ENCODE measurements at regions of chr1 and their contacts with region 1.

Region 1: GRCh38 chr1:41812051-41812450 is 106.7 kb downstream of the HIVEP3 start:
- DNase-seq: peak; percentile 59
- H3K4me3 ChIP-seq: no peak overlapping the region
- H3K27ac ChIP-seq: no peak overlapping the region
- H3K4me1 ChIP-seq: peaks cover 3% of the 10 kb centered on the region
- H3K27me3 ChIP-seq: no peaks in the 10 kb centered on the region
- CTCF ChIP-seq: peak; percentile 77 to 82

Region 2: GRCh38 chr1:41516168-41517061 is 295.6 kb before region 1 on chr1:
- CTCF ChIA-PET with region 1: no interaction called
- dilution Hi-C with region 1: no loop called
- in situ Hi-C with region 1: no loop called
- intact Hi-C with region 1: loop called (anchors 5 kb)
- DNase-seq: peak; percentile 71
- H3K4me3 ChIP-seq: peak overlapping the region in 2 of 3 experiments; percentile 18 to 38
- H3K27ac ChIP-seq: no peak overlapping the region
- H3K4me1 ChIP-seq: peaks cover 23% of the 10 kb centered on the region
- H3K27me3 ChIP-seq: no peaks in the 10 kb centered on the region
- CTCF ChIP-seq: peak; percentile 69 to 91

Region 3: GRCh38 chr1:41891199-41891896 is 79.3 kb after region 1 on chr1:
- CTCF ChIA-PET with region 1: no interaction called
- dilution Hi-C with region 1: no loop called
- in situ Hi-C with region 1: no loop called
- intact Hi-C with region 1: loop called (anchors 1 kb)
- DNase-seq: peak; percentile 55
- H3K4me3 ChIP-seq: peak overlapping the region; percentile 0 to 30 (median 17)
- H3K27ac ChIP-seq: peak overlapping the region; percentile 64
- H3K4me1 ChIP-seq: peaks cover 33% of the 10 kb centered on the region
- H3K27me3 ChIP-seq: no peaks in the 10 kb centered on the region
- CTCF ChIP-seq: peak in 1 of 2 donors; percentile 18

Region 4: DNA sequence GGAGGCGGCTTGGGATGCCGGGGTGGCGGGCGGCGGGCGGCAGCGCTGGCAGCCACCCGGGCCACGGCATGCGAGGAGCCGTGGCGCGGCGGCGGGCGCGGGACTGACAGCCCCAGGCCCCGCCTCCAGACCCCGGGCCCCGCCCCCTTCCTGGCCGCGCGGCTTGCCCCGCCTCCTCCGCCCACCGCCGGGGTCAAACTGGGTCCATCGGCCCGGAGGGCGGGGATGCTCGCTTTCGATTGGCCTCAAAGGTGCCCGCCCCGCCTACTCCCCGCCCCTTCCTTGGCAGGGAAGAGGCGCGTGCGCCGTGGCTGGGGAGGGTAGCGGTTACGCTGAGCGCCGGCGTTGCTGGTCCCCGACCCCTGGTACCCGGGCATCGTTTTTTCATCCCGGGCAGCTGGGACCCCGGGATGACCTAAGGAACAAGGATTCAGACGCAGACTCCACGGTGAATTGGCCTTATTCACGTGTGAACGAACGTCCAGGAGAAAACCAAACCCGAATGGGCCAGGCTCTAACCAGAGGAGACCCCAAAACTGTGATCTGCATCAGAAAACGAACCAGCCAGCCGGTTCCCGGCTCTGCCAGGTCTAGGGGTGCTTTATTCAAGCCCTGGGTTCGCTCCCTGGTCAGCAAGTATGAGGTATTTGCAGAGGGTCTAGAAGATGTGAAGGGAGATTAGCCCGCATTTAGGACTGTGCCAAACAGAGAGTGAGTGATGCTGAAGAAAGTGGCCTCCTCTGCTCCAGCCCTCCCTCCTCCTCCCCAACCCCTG is 224.0 kb after region 1 on chr1:
- CTCF ChIA-PET with region 1: no interaction called
- dilution Hi-C with region 1: no loop called
- in situ Hi-C with region 1: no loop called
- intact Hi-C with region 1: loop called (anchors 1 kb)
- DNase-seq: peak; percentile 87
- H3K4me3 ChIP-seq: peak overlapping the region; percentile 77 to 93 (median 86)
- H3K27ac ChIP-seq: peak overlapping the region; percentile 57
- H3K4me1 ChIP-seq: peaks cover 19% of the 10 kb centered on the region
- H3K27me3 ChIP-seq: no peaks in the 10 kb centered on the region
- CTCF ChIP-seq: no peak